Gastrocnemius medialis (tissue), 4 donors: ENCODE measurements at regions of chr6 and their contacts with region 1.

Region 1: DNA sequence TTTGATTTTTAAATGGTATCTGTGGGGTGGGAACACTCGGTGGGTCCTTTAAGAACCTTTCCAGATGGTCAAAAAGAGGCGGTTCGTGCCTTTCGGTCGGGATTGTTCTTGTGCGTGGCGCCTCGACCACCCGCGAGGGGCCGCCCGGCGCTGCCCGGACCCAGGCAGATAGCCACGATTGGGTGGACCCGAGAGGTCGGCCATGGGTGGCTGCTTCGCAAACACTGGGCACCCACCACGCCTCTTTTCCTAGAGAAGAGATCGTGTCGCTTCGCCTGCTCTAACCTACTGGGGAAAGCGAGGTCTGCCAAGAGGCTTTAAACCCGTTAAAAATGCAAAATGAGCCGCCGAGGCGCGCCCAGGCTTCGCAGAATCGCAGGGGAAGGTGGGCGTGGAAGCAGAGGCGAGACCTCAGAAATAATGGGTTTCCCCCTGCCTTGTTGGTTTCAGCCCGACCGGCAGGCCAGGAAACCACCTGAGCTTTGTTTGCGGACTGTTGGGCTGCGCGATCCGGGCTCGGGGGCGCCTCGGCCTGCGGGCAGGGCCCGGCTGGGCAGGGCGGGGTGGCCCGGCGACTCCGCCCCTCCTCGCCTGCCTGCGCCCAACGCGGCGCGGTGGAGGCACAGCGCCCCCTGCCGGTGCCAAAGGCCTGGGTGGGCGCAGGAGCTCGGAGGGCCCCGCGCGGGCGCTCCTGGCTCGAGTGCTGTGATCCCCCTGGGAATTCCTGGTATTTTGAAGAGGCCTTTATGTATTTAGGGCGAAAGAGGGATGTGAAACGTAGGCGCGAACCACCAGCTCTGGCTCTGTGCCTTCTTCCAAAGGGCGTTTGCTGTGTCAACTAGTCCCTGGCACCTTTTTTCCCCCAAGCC is 1.6 kb downstream of the MARCKS start:
- DNase-seq: peak; percentile 73 to 75
- ATAC-seq: peak; percentile 57 to 75
- H3K4me3 ChIP-seq: peak overlapping the region; percentile 70 to 94 (median 75)
- H3K27ac ChIP-seq: peak overlapping the region; percentile 83 to 93 (median 90)
- H3K4me1 ChIP-seq: peaks cover 0 to 10% of the 10 kb centered on the region in 2 donors
- H3K27me3 ChIP-seq: no peaks in the 10 kb centered on the region
- CTCF ChIP-seq: peak; percentile 87 to 100 (median 99)
- POLR2A ChIP-seq: peak; percentile 51 to 78

Region 2: DNA sequence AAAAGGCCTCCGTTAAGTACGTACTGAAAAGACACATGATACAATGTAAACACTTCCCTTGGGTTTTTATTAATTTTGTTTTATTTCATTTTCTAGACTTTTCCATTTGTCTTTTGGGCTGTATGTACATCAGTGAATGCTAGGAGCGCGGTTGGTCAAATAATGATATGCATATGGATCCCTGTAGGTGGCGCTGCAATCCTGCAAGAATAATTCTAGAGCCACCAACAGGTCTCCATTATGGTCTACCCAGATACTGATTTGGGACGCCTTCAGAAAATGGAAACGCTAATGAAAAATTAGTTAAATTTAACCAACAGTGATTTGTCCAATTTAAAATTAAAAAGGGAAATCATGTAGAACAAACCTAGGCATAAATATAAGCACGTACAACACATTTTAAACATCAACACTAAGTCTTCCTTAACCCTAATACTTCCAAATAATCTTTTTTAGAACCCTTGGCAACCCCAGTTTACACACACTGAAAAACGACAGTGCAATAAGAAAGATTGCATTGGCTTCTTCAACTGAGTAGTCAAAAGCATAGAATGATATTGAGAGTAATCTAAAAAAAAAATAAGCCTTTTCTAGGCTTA is 1078.1 kb before region 1 on chr6:
- in situ Hi-C with region 1: no loop called
- intact Hi-C with region 1: loop called (anchors 1 kb)
- DNase-seq: peak; percentile 29 to 41
- ATAC-seq: peak; percentile 68 to 80
- H3K4me3 ChIP-seq: no peak overlapping the region
- H3K27ac ChIP-seq: no peak overlapping the region
- H3K4me1 ChIP-seq: no peaks in the 10 kb centered on the region
- H3K27me3 ChIP-seq: no peaks in the 10 kb centered on the region
- CTCF ChIP-seq: peak; percentile 57 to 78 (median 73)
- POLR2A ChIP-seq: no peak

Region 3: GRCh38 chr6:113414511-113414910 is 444.2 kb before region 1 on chr6:
- in situ Hi-C with region 1: no loop called
- intact Hi-C with region 1: loop called (anchors 10 kb)
- DNase-seq: peak in 1 of 2 donors; percentile 3
- ATAC-seq: no peak
- H3K4me3 ChIP-seq: no peak overlapping the region
- H3K27ac ChIP-seq: no peak overlapping the region
- H3K4me1 ChIP-seq: peaks cover 0 to 3% of the 10 kb centered on the region in 2 donors
- H3K27me3 ChIP-seq: no peaks in the 10 kb centered on the region
- CTCF ChIP-seq: peak in 2 of 5 experiments; percentile 12 to 24
- POLR2A ChIP-seq: no peak

Region 4: GRCh38 chr6:113632220-113632864 is 226.4 kb before region 1 on chr6:
- in situ Hi-C with region 1: no loop called
- intact Hi-C with region 1: loop called (anchors 1 kb)
- DNase-seq: peak; percentile 88 to 90
- ATAC-seq: peak; percentile 90 to 95
- H3K4me3 ChIP-seq: peak overlapping the region; percentile 36 to 59 (median 50)
- H3K27ac ChIP-seq: peak overlapping the region; percentile 87 to 98 (median 90)
- H3K4me1 ChIP-seq: peaks cover 47 to 59% of the 10 kb centered on the region in 2 donors
- H3K27me3 ChIP-seq: no peaks in the 10 kb centered on the region
- CTCF ChIP-seq: no peak
- POLR2A ChIP-seq: peak; percentile 61 to 90

Region 5: GRCh38 chr6:113723182-113723581 is 135.5 kb before region 1 on chr6:
- in situ Hi-C with region 1: no loop called
- intact Hi-C with region 1: no loop called
- DNase-seq: no peak
- ATAC-seq: no peak
- H3K4me3 ChIP-seq: no peak overlapping the region
- H3K27ac ChIP-seq: no peak overlapping the region
- H3K4me1 ChIP-seq: no peaks in the 10 kb centered on the region
- H3K27me3 ChIP-seq: no peaks in the 10 kb centered on the region
- CTCF ChIP-seq: no peak
- POLR2A ChIP-seq: no peak

Region 6: DNA sequence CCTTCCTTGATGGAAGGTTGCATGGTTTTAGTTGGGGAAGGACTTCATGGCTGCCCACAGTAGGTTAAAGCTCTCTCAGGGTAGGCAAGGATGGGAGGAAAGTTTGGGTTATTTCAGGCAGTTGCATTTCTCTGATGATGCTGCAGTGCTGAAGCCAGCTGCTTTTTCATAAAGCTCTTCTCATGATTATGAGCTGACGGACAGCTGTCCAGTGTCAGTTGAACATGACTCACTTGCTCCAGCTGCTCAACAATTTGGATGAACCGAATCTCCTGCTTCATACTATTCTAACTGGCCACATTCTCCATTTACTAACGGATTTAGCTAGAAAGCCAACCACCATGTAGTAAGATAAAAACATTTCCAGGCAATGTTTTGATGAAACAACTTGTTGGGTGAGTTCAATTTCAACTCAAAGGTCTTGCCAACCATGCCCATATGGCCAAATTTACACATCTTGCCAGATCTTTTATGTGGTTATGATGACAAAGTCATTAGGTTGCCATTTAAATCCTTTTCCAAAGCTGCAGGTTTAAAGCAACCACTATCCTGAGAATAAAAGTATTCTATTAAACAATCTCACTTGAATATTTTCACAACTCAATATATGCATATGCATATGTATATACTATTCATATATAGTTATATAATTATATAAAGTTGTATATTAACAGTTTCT is 358.2 kb after region 1 on chr6:
- in situ Hi-C with region 1: no loop called
- intact Hi-C with region 1: loop called (anchors 10 kb)
- DNase-seq: peak; percentile 76 to 78
- ATAC-seq: peak; percentile 91 to 96
- H3K4me3 ChIP-seq: peak overlapping the region in 3 of 4 donors; percentile 3 to 39 (median 21)
- H3K27ac ChIP-seq: peak overlapping the region; percentile 77 to 90 (median 82)
- H3K4me1 ChIP-seq: peaks cover 0 to 22% of the 10 kb centered on the region in 2 donors
- H3K27me3 ChIP-seq: no peaks in the 10 kb centered on the region
- CTCF ChIP-seq: no peak
- POLR2A ChIP-seq: no peak